ENCODE measurements at regions of chr10 and their contacts with region 1.

Region 1: DNA sequence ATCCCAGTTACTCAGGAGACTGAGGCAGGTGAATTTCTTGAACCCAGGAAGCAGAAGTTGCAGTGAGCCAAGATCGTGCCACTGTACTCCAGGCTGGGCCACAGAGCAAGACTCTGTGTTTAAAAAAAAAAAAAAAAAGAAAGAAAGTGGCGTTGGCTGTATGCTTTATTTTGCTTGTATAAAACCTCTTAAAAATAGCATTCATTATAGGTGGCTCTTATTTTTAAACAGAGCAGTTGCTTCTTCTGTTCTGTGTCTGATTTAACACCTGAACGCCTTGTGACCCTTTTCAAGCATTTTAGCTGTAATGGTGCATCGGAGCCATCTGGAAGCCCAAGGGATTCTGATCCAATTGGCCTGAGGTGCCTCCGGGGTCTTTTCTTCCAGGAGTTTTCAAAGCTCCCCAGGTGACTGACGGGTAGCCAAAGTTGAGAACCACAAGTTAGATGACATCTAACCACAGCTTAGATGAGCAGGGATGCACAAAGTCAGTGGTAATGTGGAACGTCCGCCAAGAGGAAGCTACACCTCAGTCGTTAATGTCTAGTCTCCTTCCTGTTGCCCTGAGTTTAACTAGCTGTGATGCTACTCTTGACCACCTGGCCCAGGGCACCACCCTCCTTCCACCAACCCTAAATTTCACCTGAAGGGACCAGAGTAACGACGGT is 274.6 kb upstream of the KLF6 start:
- DNase-seq: peak; percentile 26 to 68 (median 45)
- H3K4me3 ChIP-seq: no peak overlapping the region
- H3K4me3 Mint-ChIP-seq: peak overlapping the region in 7 of 8 donors; percentile 58 to 79 (median 63)
- H3K27ac ChIP-seq: no peak overlapping the region
- H3K27ac Mint-ChIP-seq: peak overlapping the region; percentile 68 to 94 (median 89)
- H3K4me1 ChIP-seq: peaks cover 31% of the 10 kb centered on the region
- H3K4me1 Mint-ChIP-seq: peaks cover 23 to 32% (median 28%) of the 10 kb centered on the region in 4 donors
- H3K27me3 ChIP-seq: no peaks in the 10 kb centered on the region
- H3K27me3 Mint-ChIP-seq: no peaks in the 10 kb centered on the region

Region 2: DNA sequence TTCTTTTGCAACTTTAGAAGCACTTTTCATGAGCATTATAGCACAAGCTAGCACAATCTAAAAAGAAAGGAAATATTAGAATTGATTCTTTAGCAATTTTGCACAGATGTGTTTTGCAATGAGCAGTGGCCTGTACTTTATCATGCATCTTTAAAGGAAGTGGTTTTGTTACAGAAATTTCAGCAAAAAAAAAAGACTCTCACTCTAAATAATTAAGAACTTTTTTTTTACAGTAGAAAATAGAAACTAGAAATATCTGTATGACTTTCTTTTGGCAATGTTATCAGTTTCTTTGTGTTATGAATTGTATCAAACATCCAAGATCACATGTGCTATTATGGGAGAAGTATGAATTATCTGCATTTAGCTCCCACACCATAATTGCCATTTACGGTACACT is 78.9 kb before region 1 on chr10:
- CTCF ChIA-PET with region 1: no interaction called
- POLR2A ChIA-PET with region 1: interaction called, 14 read pairs
- intact Hi-C with region 1: no loop called
- DNase-seq: peak in 4 of 5 donors; percentile 29 to 52 (median 31)
- H3K4me3 ChIP-seq: no peak overlapping the region
- H3K4me3 Mint-ChIP-seq: peak overlapping the region; percentile 10 to 81 (median 68)
- H3K27ac ChIP-seq: peak overlapping the region; percentile 0
- H3K27ac Mint-ChIP-seq: peak overlapping the region in 6 of 7 donors; percentile 54 to 92 (median 77)
- H3K4me1 ChIP-seq: peaks cover 74% of the 10 kb centered on the region
- H3K4me1 Mint-ChIP-seq: peaks cover 0 to 42% (median 14%) of the 10 kb centered on the region in 4 donors
- H3K27me3 ChIP-seq: no peaks in the 10 kb centered on the region
- H3K27me3 Mint-ChIP-seq: no peaks in the 10 kb centered on the region

Region 3: DNA sequence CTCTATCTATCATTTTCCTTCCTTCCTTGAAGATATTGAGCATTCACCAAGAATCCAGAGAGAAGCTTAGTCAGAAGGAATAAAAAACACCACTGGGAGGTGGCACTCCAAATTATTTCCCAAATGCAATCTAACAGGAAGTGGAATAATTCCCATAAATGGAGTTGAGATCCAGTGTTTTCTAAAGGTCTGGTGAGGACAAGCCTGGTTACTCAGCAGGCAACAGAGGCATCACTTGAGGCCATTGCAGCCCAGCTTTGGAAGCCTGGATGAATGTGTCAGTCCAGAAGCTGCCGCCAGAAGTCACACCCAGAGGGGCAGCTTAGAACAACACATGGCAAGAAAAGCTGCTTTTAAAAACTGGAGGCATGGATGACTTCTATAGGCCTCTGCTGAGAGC is 14.3 kb after region 1 on chr10:
- CTCF ChIA-PET with region 1: interaction called, 3 read pairs
- POLR2A ChIA-PET with region 1: interaction called, 16 read pairs
- intact Hi-C with region 1: no loop called
- DNase-seq: no peak
- H3K4me3 ChIP-seq: no peak overlapping the region
- H3K4me3 Mint-ChIP-seq: peak overlapping the region in 6 of 8 donors; percentile 20 to 91 (median 86)
- H3K27ac ChIP-seq: no peak overlapping the region
- H3K27ac Mint-ChIP-seq: peak overlapping the region; percentile 87 to 97 (median 93)
- H3K4me1 ChIP-seq: peaks cover 62% of the 10 kb centered on the region
- H3K4me1 Mint-ChIP-seq: peaks cover 33 to 54% (median 43%) of the 10 kb centered on the region in 4 donors
- H3K27me3 ChIP-seq: no peaks in the 10 kb centered on the region
- H3K27me3 Mint-ChIP-seq: peaks cover 0 to 2% of the 10 kb centered on the region in 2 donors